Endothelial cell of umbilical vein (primary cell): ENCODE measurements at regions of chr14 and their contacts with region 1.

Region 1: DNA sequence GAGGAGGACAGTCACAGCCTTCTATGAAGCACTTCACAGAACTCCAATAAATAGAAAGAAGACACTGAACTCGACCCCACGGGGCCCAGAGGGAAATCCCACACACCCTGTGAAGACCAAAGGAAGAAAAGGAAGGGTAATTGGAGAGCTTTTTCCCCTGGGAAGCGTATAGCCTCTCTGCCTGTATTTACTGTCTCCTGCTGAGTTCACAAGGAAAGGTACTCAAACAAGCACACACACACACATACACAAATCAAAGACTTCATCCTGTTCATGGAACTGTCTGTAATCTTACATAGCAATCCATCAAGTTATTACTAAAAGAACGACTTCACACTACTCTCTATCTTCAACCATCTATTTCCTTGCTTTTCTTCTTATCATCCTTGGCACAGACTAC is 15.3 kb downstream of the FOXN3 start:
- DNase-seq: no peak
- H3K4me3 ChIP-seq: no peak overlapping the region
- H3K27ac ChIP-seq: no peak overlapping the region
- H3K4me1 ChIP-seq: peaks cover 2% of the 10 kb centered on the region
- H3K27me3 ChIP-seq: no peaks in the 10 kb centered on the region
- CTCF ChIP-seq: no peak
- POLR2A ChIP-seq: no peak

Region 2: GRCh38 chr14:89371585-89372511 is 29.9 kb before region 1 on chr14:
- CTCF ChIA-PET with region 1: no interaction called
- POLR2A ChIA-PET with region 1: no interaction called
- dilution Hi-C with region 1: no loop called
- intact Hi-C with region 1: loop called (anchors 1 kb)
- DNase-seq: no peak
- H3K4me3 ChIP-seq: no peak overlapping the region
- H3K27ac ChIP-seq: no peak overlapping the region
- H3K4me1 ChIP-seq: no peaks in the 10 kb centered on the region
- H3K27me3 ChIP-seq: no peaks in the 10 kb centered on the region
- CTCF ChIP-seq: no peak
- POLR2A ChIP-seq: no peak